Natural killer cell (primary cell): ENCODE measurements at regions of chr4 and their contacts with region 1.

Region 1: GRCh38 chr4:3442959-3443749 is 1.4 kb downstream of the HGFAC start:
- DNase-seq: peak; percentile 77 to 80
- ATAC-seq: peak; percentile 66 to 95 (median 87)
- H3K4me3 ChIP-seq: no peak overlapping the region
- H3K4me3 Mint-ChIP-seq: no peak overlapping the region
- H3K27ac ChIP-seq: no peak overlapping the region
- H3K27ac Mint-ChIP-seq: no peak overlapping the region
- H3K4me1 ChIP-seq: peaks cover 12% of the 10 kb centered on the region
- H3K4me1 Mint-ChIP-seq: no peaks in the 10 kb centered on the region
- H3K27me3 ChIP-seq: no peaks in the 10 kb centered on the region
- H3K27me3 Mint-ChIP-seq: no peaks in the 10 kb centered on the region
- CTCF ChIP-seq: peak; percentile 99

Region 2: GRCh38 chr4:3174371-3175338 is 268.5 kb before region 1 on chr4:
- intact Hi-C with region 1: loop called (anchors 1 kb)
- DNase-seq: peak in 1 of 2 donors; percentile 24
- ATAC-seq: peak; percentile 91 to 98 (median 95)
- H3K4me3 ChIP-seq: no peak overlapping the region
- H3K4me3 Mint-ChIP-seq: peak overlapping the region; percentile 78
- H3K27ac ChIP-seq: peak overlapping the region; percentile 44
- H3K27ac Mint-ChIP-seq: peak overlapping the region; percentile 84 to 90
- H3K4me1 ChIP-seq: peaks cover 22% of the 10 kb centered on the region
- H3K4me1 Mint-ChIP-seq: peaks cover 49 to 52% of the 10 kb centered on the region in 2 donors
- H3K27me3 ChIP-seq: no peaks in the 10 kb centered on the region
- H3K27me3 Mint-ChIP-seq: no peaks in the 10 kb centered on the region
- CTCF ChIP-seq: no peak

Region 3: GRCh38 chr4:3352941-3353594 is 90.1 kb before region 1 on chr4:
- intact Hi-C with region 1: no loop called
- DNase-seq: no peak
- ATAC-seq: no peak
- H3K4me3 ChIP-seq: no peak overlapping the region
- H3K4me3 Mint-ChIP-seq: no peak overlapping the region
- H3K27ac ChIP-seq: no peak overlapping the region
- H3K27ac Mint-ChIP-seq: no peak overlapping the region
- H3K4me1 ChIP-seq: peaks cover 3% of the 10 kb centered on the region
- H3K4me1 Mint-ChIP-seq: no peaks in the 10 kb centered on the region
- H3K27me3 ChIP-seq: no peaks in the 10 kb centered on the region
- H3K27me3 Mint-ChIP-seq: no peaks in the 10 kb centered on the region
- CTCF ChIP-seq: no peak